PC-9 (cell line): ENCODE measurements at regions of chr13 and their contacts with region 1.

Region 1: GRCh38 chr13:46355092-46355463 is 32.0 kb downstream of the RUBCNL start:
- DNase-seq: no peak
- H3K4me3 ChIP-seq: no peak overlapping the region
- H3K27ac ChIP-seq: no peak overlapping the region
- H3K4me1 ChIP-seq: no peaks in the 10 kb centered on the region; the same call in 1 of the 2 replicates
- H3K27me3 ChIP-seq: no peaks in the 10 kb centered on the region
- CTCF ChIP-seq: no peak

Region 2: DNA sequence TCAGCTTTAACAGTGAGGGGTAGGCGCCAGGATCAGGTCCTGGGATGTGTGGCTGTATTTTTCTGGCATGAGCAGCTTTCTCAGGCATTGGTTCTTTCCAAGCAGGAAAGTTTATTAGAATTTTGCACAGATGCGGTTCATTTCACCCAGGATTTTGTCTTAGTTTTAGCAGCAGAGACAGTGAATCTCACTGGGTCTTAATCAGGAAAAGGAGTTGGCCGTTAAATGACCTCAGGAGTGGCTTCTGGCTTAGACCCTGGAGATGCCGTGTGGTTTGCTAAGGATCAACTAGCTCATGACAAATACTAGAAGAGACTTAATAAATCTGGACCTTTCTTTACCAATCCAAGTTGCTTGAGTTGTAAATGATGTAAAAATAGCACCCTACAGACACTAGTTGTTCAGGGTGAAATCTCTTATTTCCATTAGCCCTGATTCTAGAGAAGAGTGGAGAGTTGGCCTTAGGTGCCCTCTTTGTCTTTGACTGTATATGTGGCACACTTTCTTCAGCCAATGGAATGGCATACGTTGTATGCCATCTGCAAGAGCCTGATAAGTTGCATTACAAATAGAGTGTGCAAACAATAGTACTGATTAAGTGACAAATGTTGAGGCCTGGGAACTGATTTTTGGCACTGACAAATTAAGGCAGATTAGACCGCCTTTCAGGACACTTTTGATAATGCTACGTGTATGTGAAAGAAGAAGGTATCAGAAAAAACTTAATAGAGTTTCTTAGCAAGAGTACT is 231.9 kb after region 1 on chr13:
- CTCF ChIA-PET with region 1: no interaction called
- POLR2A ChIA-PET with region 1: interaction called, 10 read pairs
- intact Hi-C with region 1: no loop called
- DNase-seq: no peak
- H3K4me3 ChIP-seq: no peak overlapping the region
- H3K27ac ChIP-seq: no peak overlapping the region
- H3K4me1 ChIP-seq: peaks cover 6% of the 10 kb centered on the region; the same call in 1 of the 2 replicates
- H3K27me3 ChIP-seq: no peaks in the 10 kb centered on the region
- CTCF ChIP-seq: no peak